IMR-90 (cell line): ENCODE measurements at regions of chr12 and their contacts with region 1.

Region 1: GRCh38 chr12:34022079-34022830 is at the start of gene ALG10:
- DNase-seq: peak; percentile 97
- ATAC-seq: peak; percentile 100
- H3K4me3 ChIP-seq: peak within 1 kb of the TSS; percentile 65
- H3K27ac ChIP-seq: peak within 1 kb of the TSS; percentile 48
- H3K4me1 ChIP-seq: no peaks in the 10 kb centered on the region
- H3K27me3 ChIP-seq: no peaks in the 10 kb centered on the region
- CTCF ChIP-seq: peak; percentile 78
- POLR2A ChIP-seq: peak; percentile 42
- RAD21 ChIP-seq: peak; percentile 79
- total RNA-seq, gene ALG10: 7.2 and 9.7 TPM in 2 replicates

Region 2: DNA sequence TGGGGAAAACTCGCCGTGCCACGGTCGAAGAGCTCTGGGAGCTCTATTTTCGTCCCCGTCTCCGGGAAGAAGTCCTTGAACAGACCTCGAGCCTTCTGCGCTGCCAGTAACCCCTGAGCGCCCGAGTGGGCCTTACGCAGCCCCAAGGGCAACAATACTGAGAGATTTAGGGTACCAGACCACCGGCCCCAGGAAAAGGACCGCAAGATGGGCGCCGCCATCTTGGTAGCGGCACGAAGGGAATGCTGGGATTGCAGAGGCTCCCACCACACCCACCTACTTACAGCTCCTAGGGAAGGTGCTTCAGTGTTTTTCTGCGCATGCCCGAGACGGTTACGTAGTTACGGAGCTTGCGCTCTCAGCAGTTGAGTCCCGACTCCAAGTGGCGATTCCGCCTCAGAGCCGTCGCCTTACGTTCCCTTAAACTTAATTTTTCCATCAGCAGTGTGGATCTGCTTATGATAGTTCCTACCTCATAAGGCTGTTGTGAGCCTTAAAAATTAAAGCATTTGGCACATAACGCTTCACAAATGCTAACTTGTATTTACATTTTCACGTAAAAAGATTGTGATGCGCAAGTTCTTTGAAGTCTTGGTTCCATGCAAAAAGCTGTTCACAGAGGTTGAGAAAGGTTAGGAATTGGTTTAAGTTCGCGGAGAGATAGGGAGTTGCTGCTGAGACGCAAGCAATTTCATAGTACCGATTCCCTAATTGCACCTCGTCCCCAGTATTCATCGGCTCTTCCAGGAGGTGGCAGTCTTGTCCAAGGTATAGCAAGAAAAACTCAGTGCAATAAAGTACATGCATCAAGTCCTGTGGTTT is 1266.4 kb before region 1 on chr12 and contains the start of gene YARS2:
- CTCF ChIA-PET with region 1: interaction called, 10 read pairs
- POLR2A ChIA-PET with region 1: interaction called, 8 read pairs
- dilution Hi-C with region 1: no loop called
- in situ Hi-C with region 1: loop called (anchors 5 kb)
- intact Hi-C with region 1: loop called (anchors 1 kb)
- DNase-seq: peak; percentile 99
- ATAC-seq: peak; percentile 96
- H3K4me3 ChIP-seq: peak within 1 kb of the TSS; percentile 76
- H3K27ac ChIP-seq: peak within 1 kb of the TSS; percentile 78
- H3K4me1 ChIP-seq: peaks cover 5% of the 10 kb centered on the region; the same call in 1 of the 2 replicates
- H3K27me3 ChIP-seq: no peaks in the 10 kb centered on the region
- CTCF ChIP-seq: peak; percentile 92
- POLR2A ChIP-seq: peak; percentile 95
- RAD21 ChIP-seq: peak; percentile 93
- total RNA-seq, gene YARS2: 21.9 and 26.9 TPM in 2 replicates

Region 3: DNA sequence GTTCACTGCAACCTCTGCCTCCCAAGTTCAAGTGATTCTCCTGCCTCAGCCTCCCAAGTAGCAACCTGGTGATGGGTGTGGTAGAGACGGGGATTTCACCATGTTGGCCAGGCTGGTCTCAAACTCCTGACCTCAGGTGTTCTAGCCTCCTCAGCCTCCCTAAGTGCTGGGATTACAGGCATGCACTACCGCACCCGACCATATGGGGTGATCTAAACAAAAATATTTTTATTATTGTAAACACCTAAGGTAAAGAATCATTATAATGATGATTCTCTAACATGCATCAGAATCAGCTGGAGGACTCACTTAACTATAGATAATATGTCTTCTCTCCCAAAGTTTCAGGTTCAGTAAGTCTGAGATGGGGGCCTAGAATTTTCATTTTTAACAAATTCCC is 96.2 kb before region 1 on chr12:
- CTCF ChIA-PET with region 1: no interaction called
- POLR2A ChIA-PET with region 1: no interaction called
- dilution Hi-C with region 1: no loop called
- in situ Hi-C with region 1: loop called (anchors 25 kb)
- intact Hi-C with region 1: no loop called
- DNase-seq: no peak
- ATAC-seq: no peak
- H3K4me3 ChIP-seq: no peak overlapping the region
- H3K27ac ChIP-seq: no peak overlapping the region
- H3K4me1 ChIP-seq: no peaks in the 10 kb centered on the region
- H3K27me3 ChIP-seq: no peaks in the 10 kb centered on the region
- CTCF ChIP-seq: no peak
- POLR2A ChIP-seq: no peak
- RAD21 ChIP-seq: no peak

Region 4: GRCh38 chr12:34097213-34097612 is 75.0 kb after region 1 on chr12:
- CTCF ChIA-PET with region 1: no interaction called
- POLR2A ChIA-PET with region 1: no interaction called
- dilution Hi-C with region 1: no loop called
- in situ Hi-C with region 1: no loop called
- intact Hi-C with region 1: no loop called
- DNase-seq: no peak
- ATAC-seq: no peak
- H3K4me3 ChIP-seq: no peak overlapping the region
- H3K27ac ChIP-seq: no peak overlapping the region
- H3K4me1 ChIP-seq: no peaks in the 10 kb centered on the region
- H3K27me3 ChIP-seq: no peaks in the 10 kb centered on the region
- CTCF ChIP-seq: no peak
- POLR2A ChIP-seq: no peak
- RAD21 ChIP-seq: no peak

Region 5: DNA sequence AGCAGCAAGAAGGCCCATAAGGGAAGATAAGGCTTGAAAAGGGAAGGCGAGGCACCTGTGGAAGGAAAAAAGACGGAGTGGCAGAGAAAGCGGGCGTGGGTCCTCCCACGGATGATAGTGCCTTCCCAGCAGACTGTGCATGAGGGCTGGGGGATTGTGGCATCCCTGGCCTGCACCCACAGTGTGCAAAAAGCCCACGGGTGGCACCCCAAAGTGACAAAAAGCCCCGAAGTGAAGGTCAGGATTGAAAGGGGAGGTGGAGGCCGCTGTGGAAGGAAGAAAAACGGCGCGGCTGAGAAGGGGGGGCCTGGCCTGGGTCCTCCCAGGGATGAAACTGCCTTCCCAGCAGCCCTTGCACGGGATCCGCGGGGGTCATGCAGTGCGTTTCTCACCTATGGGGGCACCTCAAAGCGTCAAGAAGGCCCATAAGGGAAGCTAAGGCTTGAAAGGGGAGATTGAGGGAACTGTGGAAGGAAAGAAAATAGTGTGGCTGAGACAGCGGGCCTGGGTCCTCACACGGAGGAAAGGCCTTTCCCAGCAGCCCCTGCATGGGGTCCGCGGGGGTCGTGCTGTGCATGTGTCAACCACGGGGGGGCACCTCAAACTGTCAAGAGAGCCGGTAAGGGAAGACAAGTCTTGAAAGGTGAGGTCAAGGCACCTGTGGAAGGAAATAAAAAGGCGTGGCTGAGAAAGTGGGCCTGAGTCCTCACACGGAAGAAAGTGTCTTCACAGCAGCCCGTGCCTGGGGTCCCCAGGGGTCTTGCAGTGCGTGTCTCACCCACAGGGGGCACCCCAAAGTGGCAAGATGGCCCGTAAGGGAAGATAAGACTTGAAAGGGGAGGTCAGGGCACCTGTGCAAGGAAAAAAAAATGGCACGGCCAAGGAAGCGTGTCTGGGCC is 274.1 kb after region 1 on chr12:
- CTCF ChIA-PET with region 1: no interaction called
- POLR2A ChIA-PET with region 1: no interaction called
- dilution Hi-C with region 1: no loop called
- in situ Hi-C with region 1: no loop called
- intact Hi-C with region 1: no loop called
- DNase-seq: no peak
- ATAC-seq: no peak
- H3K4me3 ChIP-seq: no peak overlapping the region
- H3K27ac ChIP-seq: no peak overlapping the region
- H3K4me1 ChIP-seq: no peaks in the 10 kb centered on the region
- H3K27me3 ChIP-seq: no peaks in the 10 kb centered on the region
- CTCF ChIP-seq: no peak
- POLR2A ChIP-seq: no peak
- RAD21 ChIP-seq: no peak